Psoas muscle (tissue), 8 donors: ENCODE measurements at regions of chr12 and their contacts with region 1.

Region 1: GRCh38 chr12:124745891-124746570 is 117.6 kb downstream of the SCARB1 start:
- DNase-seq: peak; percentile 94 to 96
- ATAC-seq: peak; percentile 89 to 94 (median 93)
- H3K4me3 ChIP-seq: peak overlapping the region; percentile 21
- H3K27ac ChIP-seq: peak overlapping the region; percentile 85
- H3K4me1 ChIP-seq: peaks cover 25% of the 10 kb centered on the region
- H3K27me3 ChIP-seq: no peaks in the 10 kb centered on the region
- CTCF ChIP-seq: no peak

Region 2: GRCh38 chr12:124680863-124681778 is 64.9 kb before region 1 on chr12:
- intact Hi-C with region 1: loop called in 1 of 2 experiments (anchors 5 kb)
- DNase-seq: peak; percentile 73 to 80
- ATAC-seq: peak; percentile 14 to 72 (median 58)
- H3K4me3 ChIP-seq: no peak overlapping the region
- H3K27ac ChIP-seq: peak overlapping the region; percentile 82
- H3K4me1 ChIP-seq: peaks cover 54% of the 10 kb centered on the region
- H3K27me3 ChIP-seq: no peaks in the 10 kb centered on the region
- CTCF ChIP-seq: peak; percentile 31